ENCODE measurements at regions of chr16 and their contacts with region 1.

Region 1: DNA sequence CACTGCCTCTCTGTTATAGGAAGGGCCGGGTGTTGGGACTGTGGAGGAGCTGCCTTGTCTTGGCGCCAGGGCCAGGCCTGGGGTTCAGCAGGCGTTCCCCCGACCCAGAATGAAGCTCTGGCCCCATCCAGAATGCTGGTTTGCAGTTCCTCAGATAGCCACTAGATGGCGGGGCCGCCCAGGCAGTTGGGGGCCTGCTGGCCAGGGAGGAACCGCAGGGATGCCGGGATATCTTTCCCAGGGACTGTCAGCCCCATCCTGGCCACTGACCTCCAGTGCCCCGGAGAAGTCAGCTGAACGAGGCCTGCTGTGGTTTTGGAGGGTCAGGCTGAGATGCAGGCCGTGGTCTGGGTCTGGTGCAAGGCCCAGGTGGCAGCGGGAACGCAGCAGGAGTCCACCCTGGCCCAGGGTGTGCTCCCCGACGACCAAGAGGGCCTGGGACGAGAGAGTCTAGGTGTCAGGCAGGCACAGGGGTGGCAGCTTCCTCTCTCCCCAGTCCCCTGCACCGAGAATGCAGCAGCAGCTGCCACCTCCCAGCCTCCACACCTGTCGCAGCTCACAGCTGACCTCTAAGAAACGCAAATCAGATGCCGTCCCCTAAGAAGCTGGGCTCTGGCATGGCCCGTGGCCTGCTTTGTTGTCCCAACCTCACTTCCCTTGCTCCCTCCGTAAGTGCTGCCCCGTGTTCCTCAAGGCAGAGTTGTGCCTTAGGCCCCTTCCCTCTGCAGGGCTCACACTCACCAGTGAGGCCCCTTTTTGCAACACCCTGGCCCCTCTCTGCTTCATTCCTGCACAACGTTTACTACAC is 51.2 kb downstream of the RMI2 start:
- DNase-seq: peak; percentile 76 to 86 (median 82)
- ATAC-seq: peak; percentile 86 to 90 (median 86)
- H3K4me3 ChIP-seq: no peak overlapping the region
- H3K27ac ChIP-seq: no peak overlapping the region
- H3K4me1 ChIP-seq: peaks cover 0 to 2% (median 0%) of the 10 kb centered on the region in 4 donors
- H3K27me3 ChIP-seq: no peaks in the 10 kb centered on the region
- CTCF ChIP-seq: peak; percentile 98 to 99 (median 99)
- POLR2A ChIP-seq: no peak

Region 2: DNA sequence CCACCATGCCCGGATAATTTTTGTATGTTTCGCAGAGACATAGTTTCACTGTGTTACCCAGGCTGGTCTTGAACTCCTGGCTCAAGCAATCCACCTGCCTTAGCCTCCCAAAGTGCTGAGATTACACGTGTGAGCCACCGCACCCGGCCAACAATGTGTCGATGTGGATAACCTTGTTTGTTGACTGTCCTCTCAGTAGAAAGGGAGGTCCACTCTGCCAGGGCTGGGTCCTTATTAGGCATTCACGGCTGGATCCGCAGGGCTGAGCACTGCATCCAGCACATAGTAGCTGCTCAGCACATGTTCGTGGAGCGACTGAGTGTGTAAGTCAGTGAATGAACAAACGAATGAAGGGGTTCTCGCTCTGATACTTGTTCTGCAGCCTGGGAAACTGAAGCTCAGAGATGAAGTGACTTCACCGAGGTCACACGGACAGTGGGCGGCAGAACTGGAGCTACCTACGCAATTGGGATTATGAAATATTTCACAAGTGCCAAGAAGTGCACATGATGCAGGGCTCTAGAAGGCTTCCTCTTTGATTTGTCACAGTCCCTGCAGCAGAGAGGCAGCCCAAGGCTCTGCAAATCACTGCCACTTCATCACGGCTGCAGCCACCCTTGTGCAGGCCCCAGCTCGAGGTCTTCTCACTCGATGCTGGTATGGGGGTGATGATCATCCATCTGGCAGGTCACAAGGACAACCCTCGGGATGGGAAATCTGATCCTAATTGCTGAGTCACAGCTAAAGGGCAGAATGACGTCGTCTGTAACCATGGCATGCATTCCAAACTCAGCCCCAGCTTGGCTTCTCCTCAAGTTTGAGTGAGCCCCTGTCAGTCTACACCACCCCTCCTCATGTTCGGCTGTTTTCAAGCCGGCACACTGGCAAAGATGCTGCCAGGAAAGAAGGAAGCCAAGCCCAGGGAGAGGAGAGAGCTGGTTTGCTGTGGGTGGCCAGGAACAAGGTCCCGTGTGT is 243.8 kb after region 1 on chr16:
- intact Hi-C with region 1: loop called (anchors 5 to 10 kb)
- DNase-seq: peak; percentile 78 to 91 (median 86)
- ATAC-seq: peak; percentile 80 to 91 (median 82)
- H3K4me3 ChIP-seq: no peak overlapping the region
- H3K27ac ChIP-seq: peak overlapping the region; percentile 92 to 97 (median 95)
- H3K4me1 ChIP-seq: peaks cover 0 to 17% (median 9%) of the 10 kb centered on the region in 4 donors
- H3K27me3 ChIP-seq: no peaks in the 10 kb centered on the region
- CTCF ChIP-seq: no peak
- POLR2A ChIP-seq: peak; percentile 77

Region 3: GRCh38 chr16:11797166-11797956 is 400.9 kb after region 1 on chr16 and contains the start of gene ZC3H7A:
- intact Hi-C with region 1: loop called in 1 of 2 experiments (anchors 10 kb)
- DNase-seq: peak; percentile 98 to 99 (median 99)
- ATAC-seq: peak; percentile 93 to 98 (median 96)
- H3K4me3 ChIP-seq: peak within 1 kb of the TSS; percentile 81 to 91 (median 82)
- H3K27ac ChIP-seq: peak within 1 kb of the TSS; percentile 96 to 98 (median 97)
- H3K4me1 ChIP-seq: peaks cover 0 to 52% (median 20%) of the 10 kb centered on the region in 4 donors
- H3K27me3 ChIP-seq: no peaks in the 10 kb centered on the region
- CTCF ChIP-seq: peak; percentile 77 to 99 (median 88)
- POLR2A ChIP-seq: peak; percentile 98
- total RNA-seq, gene ZC3H7A: 22.8 to 34.0 (median 26.9) TPM

Region 4: DNA sequence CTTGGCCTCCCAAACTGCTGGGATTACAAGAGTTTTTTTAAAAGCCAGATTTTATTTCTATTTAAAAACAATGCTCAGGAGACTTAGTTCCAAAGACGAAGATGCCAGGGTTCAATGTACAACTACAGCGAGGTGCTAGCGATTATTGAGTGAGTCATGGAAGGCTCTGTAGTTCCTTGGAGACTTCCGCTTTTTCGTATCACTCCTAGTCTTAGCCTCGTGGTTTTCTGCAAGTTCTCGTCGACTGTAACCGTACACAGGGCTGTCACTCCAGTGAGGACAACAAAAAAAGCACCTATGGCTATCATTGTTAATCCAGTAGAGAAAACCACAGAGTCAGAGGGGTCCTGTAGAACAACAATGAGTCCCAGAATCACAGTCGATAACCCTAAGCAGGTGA is 423.4 kb after region 1 on chr16:
- intact Hi-C with region 1: loop called in 1 of 2 experiments (anchors 10 kb)
- DNase-seq: no peak
- ATAC-seq: peak in 1 of 4 donors; percentile 28
- H3K4me3 ChIP-seq: no peak overlapping the region
- H3K27ac ChIP-seq: no peak overlapping the region
- H3K4me1 ChIP-seq: peaks cover 0 to 7% (median 0%) of the 10 kb centered on the region in 4 donors
- H3K27me3 ChIP-seq: no peaks in the 10 kb centered on the region
- CTCF ChIP-seq: no peak
- POLR2A ChIP-seq: no peak

Measured in right lobe of liver (tissue), 6 donors.